ENCODE measurements at regions of chr19 and their contacts with region 1.

Region 1: DNA sequence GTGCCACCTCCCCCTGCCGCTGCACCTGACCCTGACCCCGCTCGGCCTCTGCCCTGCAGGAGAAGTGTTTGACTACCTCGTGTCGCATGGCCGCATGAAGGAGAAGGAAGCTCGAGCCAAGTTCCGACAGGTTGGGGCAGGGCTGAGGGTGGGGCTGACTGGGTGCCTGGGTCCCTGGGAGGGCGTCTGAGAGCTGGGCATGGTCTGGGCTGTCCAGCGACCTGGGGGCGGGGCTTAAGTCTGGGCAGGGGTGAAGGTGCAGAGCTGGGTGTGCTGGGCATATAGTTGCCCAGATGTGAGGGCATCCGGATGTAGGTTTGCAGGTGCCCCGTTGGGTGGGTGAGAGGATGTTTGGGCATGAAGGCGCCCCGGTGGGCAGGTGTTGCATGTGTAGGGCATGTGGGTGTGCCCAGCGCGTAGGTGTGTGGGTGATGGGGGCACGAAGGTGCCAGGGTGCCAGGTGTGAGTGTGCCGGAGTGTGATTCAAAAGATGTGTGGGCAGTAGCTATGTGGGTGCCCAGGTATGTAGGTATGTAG is 13.8 kb downstream of the MARK4 start:
- DNase-seq: no peak
- ATAC-seq: no peak
- H3K4me3 ChIP-seq: no peak overlapping the region
- H3K4me3 Mint-ChIP-seq: no peak overlapping the region
- H3K27ac ChIP-seq: no peak overlapping the region
- H3K27ac Mint-ChIP-seq: no peak overlapping the region
- H3K4me1 ChIP-seq: no peaks in the 10 kb centered on the region
- H3K4me1 Mint-ChIP-seq: no peaks in the 10 kb centered on the region
- H3K27me3 ChIP-seq: no peaks in the 10 kb centered on the region
- H3K27me3 Mint-ChIP-seq: no peaks in the 10 kb centered on the region

Region 2: DNA sequence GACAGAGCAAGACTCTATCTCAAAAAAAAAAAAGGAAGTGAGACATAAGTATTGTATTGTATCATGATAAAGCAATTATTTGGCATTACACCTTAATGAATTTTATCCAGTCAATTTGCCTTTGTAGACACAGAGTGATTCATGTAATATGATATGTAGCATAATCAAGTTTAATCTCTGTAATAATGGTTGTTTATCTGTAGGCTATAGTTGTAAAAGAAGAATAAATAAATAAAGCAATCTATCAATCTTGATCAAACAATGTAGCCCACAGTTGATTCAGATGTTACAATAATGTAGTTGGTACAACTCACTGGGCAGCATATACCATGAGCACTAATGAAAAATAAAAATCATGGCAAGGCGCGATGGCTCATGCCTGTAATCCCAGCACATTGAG is 706.9 kb before region 1 on chr19:
- CTCF ChIA-PET with region 1: interaction called in 1 of 2 experiments, 10 read pairs
- POLR2A ChIA-PET with region 1: no interaction called
- DNase-seq: no peak
- ATAC-seq: no peak
- H3K4me3 ChIP-seq: no peak overlapping the region
- H3K4me3 Mint-ChIP-seq: no peak overlapping the region
- H3K27ac ChIP-seq: no peak overlapping the region
- H3K27ac Mint-ChIP-seq: no peak overlapping the region
- H3K4me1 ChIP-seq: no peaks in the 10 kb centered on the region
- H3K4me1 Mint-ChIP-seq: no peaks in the 10 kb centered on the region
- H3K27me3 ChIP-seq: no peaks in the 10 kb centered on the region
- H3K27me3 Mint-ChIP-seq: peaks cover 17 to 20% of the 10 kb centered on the region in 2 donors

Region 3: DNA sequence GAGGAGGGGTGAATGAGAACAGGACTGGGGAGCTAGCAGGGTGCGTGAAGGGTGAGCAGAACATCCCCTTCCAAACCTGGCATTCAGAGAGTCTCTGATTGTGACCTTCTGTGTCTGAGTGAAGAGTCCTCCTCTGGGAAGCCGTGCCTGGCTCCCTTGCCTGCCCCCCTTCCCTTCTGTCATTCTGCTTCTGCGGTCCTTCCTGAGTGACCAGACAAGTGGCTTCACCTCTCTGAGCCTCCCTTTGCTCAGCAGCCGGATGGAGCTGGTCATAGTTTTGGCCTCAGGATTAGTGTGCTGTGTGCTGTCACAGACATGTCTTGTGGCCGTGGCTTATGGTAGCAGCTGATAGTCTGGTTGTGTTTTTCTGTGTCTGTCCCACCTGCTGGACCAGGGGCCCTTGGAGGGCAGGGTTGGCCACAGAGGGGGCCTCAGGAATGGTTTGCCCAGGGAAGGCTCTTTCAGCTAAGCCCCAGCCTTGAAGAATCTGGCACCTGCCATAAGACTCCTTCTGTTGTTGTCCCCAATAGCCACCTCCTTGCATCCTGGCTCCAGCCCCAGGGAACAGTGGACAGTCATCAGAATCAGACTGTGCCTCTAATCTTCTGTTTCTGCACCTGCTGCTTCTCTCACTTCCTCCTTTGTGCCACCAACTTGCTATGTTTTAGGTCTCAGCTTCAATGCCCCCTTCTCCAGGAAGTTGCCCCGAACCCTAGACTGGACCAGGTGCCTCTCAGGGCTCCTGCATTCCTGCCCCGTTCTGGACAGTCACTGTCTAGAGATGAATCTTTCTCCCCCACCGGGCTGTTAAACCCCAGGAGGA is 303.7 kb before region 1 on chr19:
- CTCF ChIA-PET with region 1: no interaction called
- POLR2A ChIA-PET with region 1: no interaction called
- DNase-seq: no peak
- ATAC-seq: no peak
- H3K4me3 ChIP-seq: no peak overlapping the region
- H3K4me3 Mint-ChIP-seq: no peak overlapping the region
- H3K27ac ChIP-seq: no peak overlapping the region
- H3K27ac Mint-ChIP-seq: no peak overlapping the region
- H3K4me1 ChIP-seq: peaks cover 6 to 45% of the 10 kb centered on the region in 2 experiments
- H3K4me1 Mint-ChIP-seq: peaks cover 40 to 47% (median 43%) of the 10 kb centered on the region in 3 donors
- H3K27me3 ChIP-seq: no peaks in the 10 kb centered on the region
- H3K27me3 Mint-ChIP-seq: no peaks in the 10 kb centered on the region

Region 4: DNA sequence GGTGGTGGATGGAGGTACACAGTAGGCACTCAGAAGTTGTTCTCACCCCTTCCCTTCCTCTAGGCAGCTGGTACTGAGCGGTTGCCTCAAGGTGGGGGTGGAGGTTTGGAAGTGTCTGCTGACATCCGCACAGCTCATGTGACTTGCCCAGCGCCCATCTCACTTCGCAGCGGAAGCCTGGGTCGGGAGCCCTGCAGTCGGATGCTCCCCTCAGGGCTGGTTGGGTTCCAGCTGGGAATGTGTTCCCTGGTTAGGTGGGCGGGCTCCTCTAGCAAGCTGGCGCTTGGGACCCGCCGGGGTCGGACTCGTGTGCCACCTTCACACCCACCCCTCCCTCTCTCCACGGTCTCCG is 161.7 kb before region 1 on chr19:
- CTCF ChIA-PET with region 1: no interaction called
- POLR2A ChIA-PET with region 1: no interaction called
- DNase-seq: peak in 34 of 35 experiments; percentile 15 to 73 (median 44)
- ATAC-seq: peak; percentile 80 to 95 (median 88)
- H3K4me3 ChIP-seq: peak overlapping the region; percentile 41 to 46
- H3K4me3 Mint-ChIP-seq: peak overlapping the region; percentile 66 to 70 (median 69)
- H3K27ac ChIP-seq: peak overlapping the region; percentile 54
- H3K27ac Mint-ChIP-seq: peak overlapping the region; percentile 61 to 85
- H3K4me1 ChIP-seq: peaks cover 22 to 59% of the 10 kb centered on the region in 2 experiments
- H3K4me1 Mint-ChIP-seq: peaks cover 68 to 74% (median 69%) of the 10 kb centered on the region in 3 donors
- H3K27me3 ChIP-seq: no peaks in the 10 kb centered on the region
- H3K27me3 Mint-ChIP-seq: no peaks in the 10 kb centered on the region

Region 5: GRCh38 chr19:45276284-45276687 is 11.4 kb after region 1 on chr19:
- CTCF ChIA-PET with region 1: no interaction called
- POLR2A ChIA-PET with region 1: no interaction called
- DNase-seq: no peak
- ATAC-seq: no peak
- H3K4me3 ChIP-seq: no peak overlapping the region
- H3K4me3 Mint-ChIP-seq: no peak overlapping the region
- H3K27ac ChIP-seq: no peak overlapping the region
- H3K27ac Mint-ChIP-seq: no peak overlapping the region
- H3K4me1 ChIP-seq: no peaks in the 10 kb centered on the region
- H3K4me1 Mint-ChIP-seq: no peaks in the 10 kb centered on the region
- H3K27me3 ChIP-seq: no peaks in the 10 kb centered on the region
- H3K27me3 Mint-ChIP-seq: no peaks in the 10 kb centered on the region

Region 6: GRCh38 chr19:46487802-46488445 is 1223.1 kb after region 1 on chr19:
- CTCF ChIA-PET with region 1: no interaction called
- POLR2A ChIA-PET with region 1: no interaction called
- DNase-seq: peak; percentile 27 to 81 (median 67)
- ATAC-seq: peak; percentile 60 to 83 (median 74)
- H3K4me3 ChIP-seq: no peak overlapping the region
- H3K4me3 Mint-ChIP-seq: peak overlapping the region in 2 of 3 donors; percentile 9 to 52
- H3K27ac ChIP-seq: no peak overlapping the region
- H3K27ac Mint-ChIP-seq: no peak overlapping the region
- H3K4me1 ChIP-seq: peaks cover under 1 to 42% of the 10 kb centered on the region in 2 experiments
- H3K4me1 Mint-ChIP-seq: peaks cover 30 to 33% (median 33%) of the 10 kb centered on the region in 3 donors
- H3K27me3 ChIP-seq: peaks cover 7 to 69% of the 10 kb centered on the region in 2 experiments
- H3K27me3 Mint-ChIP-seq: peaks cover 59 to 76% of the 10 kb centered on the region in 2 donors

Measured in T-cell (primary cell).